HepG2 (cell line): ENCODE measurements at regions of chrX and their contacts with region 1.

Region 1: DNA sequence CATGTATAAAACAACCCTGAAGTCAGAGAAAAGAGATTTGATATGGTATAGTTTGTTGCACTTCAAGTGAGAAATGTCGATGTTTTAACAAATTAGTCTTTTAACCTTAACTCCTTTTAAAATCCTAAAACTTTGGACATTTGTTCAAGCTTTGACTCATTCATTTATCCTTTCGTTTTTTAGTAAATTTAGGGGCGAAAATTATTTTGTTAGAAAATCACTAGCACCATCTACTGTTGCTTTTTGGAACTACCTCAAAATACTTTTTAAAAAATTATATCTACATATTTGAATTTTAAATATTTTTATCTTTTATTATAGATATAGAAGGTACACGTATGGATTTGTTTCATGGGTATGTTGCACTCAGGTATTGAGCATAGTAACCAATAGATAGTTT is 165.1 kb upstream of the POF1B start:
- DNase-seq: no peak
- ATAC-seq: no peak
- H3K4me3 ChIP-seq: no peak overlapping the region
- H3K27ac ChIP-seq: no peak overlapping the region
- H3K4me1 ChIP-seq: no peaks in the 10 kb centered on the region
- H3K27me3 ChIP-seq: no peaks in the 10 kb centered on the region
- CTCF ChIP-seq: no peak
- EP300 ChIP-seq: no peak
- POLR2A ChIP-seq: no peak
- RAD21 ChIP-seq: no peak

Region 2: DNA sequence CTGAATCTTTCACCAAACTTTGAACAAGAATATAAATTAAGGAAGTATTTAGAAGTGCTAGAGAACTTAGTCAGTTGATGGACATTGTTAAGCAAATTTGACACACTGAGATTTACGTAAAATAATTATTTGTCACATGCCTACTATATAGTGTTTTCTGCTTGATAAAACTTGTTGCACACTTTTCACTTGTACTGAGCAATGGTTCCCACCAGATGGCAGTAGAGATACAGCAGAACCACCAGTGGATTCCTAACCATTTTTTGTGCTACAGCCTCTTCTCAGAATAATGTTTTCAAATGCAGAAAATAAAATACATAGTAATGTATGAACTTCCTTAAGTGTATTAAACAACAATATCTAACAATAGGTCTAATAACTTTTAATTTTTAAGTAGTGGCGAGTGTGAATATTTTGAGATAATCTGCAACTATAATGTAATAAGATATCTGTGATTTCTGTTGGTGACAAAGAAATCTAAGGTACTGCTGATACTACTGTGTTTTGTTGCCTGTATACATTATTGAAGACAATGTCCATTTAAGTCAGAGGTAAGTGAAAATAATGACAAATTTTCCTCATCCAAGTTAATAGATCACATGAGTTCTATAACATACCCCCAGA is 459.7 kb before region 1 on chrX:
- CTCF ChIA-PET with region 1: no interaction called
- POLR2A ChIA-PET with region 1: no interaction called
- in situ Hi-C with region 1: no loop called
- intact Hi-C with region 1: loop called (anchors 2 kb)
- DNase-seq: peak; percentile 11
- ATAC-seq: no peak; the same call in 2 of the 3 replicates
- H3K4me3 ChIP-seq: no peak overlapping the region
- H3K27ac ChIP-seq: no peak overlapping the region
- H3K4me1 ChIP-seq: no peaks in the 10 kb centered on the region
- H3K27me3 ChIP-seq: no peaks in the 10 kb centered on the region
- CTCF ChIP-seq: peak; percentile 51
- EP300 ChIP-seq: no peak
- POLR2A ChIP-seq: no peak
- RAD21 ChIP-seq: no peak

Region 3: GRCh38 chrX:85111347-85111746 is 433.3 kb before region 1 on chrX:
- CTCF ChIA-PET with region 1: interaction called, 3 read pairs
- POLR2A ChIA-PET with region 1: no interaction called
- in situ Hi-C with region 1: loop called (anchors 10 kb)
- intact Hi-C with region 1: no loop called
- DNase-seq: no peak
- ATAC-seq: no peak
- H3K4me3 ChIP-seq: no peak overlapping the region
- H3K27ac ChIP-seq: no peak overlapping the region
- H3K4me1 ChIP-seq: peaks cover 7% of the 10 kb centered on the region
- H3K27me3 ChIP-seq: no peaks in the 10 kb centered on the region
- CTCF ChIP-seq: peak; percentile 40
- EP300 ChIP-seq: no peak
- POLR2A ChIP-seq: no peak
- RAD21 ChIP-seq: no peak

Region 4: GRCh38 chrX:85309717-85310116 is 234.9 kb before region 1 on chrX:
- CTCF ChIA-PET with region 1: no interaction called
- POLR2A ChIA-PET with region 1: no interaction called
- in situ Hi-C with region 1: no loop called
- intact Hi-C with region 1: no loop called
- DNase-seq: no peak
- ATAC-seq: no peak; the same call in 2 of the 3 replicates
- H3K4me3 ChIP-seq: no peak overlapping the region
- H3K27ac ChIP-seq: no peak overlapping the region
- H3K4me1 ChIP-seq: no peaks in the 10 kb centered on the region
- H3K27me3 ChIP-seq: no peaks in the 10 kb centered on the region
- CTCF ChIP-seq: no peak
- EP300 ChIP-seq: no peak
- POLR2A ChIP-seq: no peak
- RAD21 ChIP-seq: no peak